BJ (cell line): ENCODE measurements at regions of chr1 and their contacts with region 1.

Region 1: GRCh38 chr1:15128520-15129313 is 24.8 kb upstream of the TMEM51 start:
- DNase-seq: no peak
- H3K4me3 ChIP-seq: no peak overlapping the region
- H3K27me3 ChIP-seq: no peaks in the 10 kb centered on the region
- CTCF ChIP-seq: peak; percentile 96

Region 2: GRCh38 chr1:15141935-15142539 is 13.3 kb after region 1 on chr1:
- CTCF ChIA-PET with region 1: interaction called, 10 read pairs
- POLR2A ChIA-PET with region 1: no interaction called
- DNase-seq: no peak
- H3K4me3 ChIP-seq: no peak overlapping the region
- H3K27me3 ChIP-seq: peaks cover 5% of the 10 kb centered on the region
- CTCF ChIP-seq: no peak

Region 3: GRCh38 chr1:15152318-15153183 is 23.8 kb after region 1 on chr1:
- CTCF ChIA-PET with region 1: interaction called, 16 read pairs
- POLR2A ChIA-PET with region 1: no interaction called
- DNase-seq: no peak
- H3K4me3 ChIP-seq: peak overlapping the region; percentile 41
- H3K27me3 ChIP-seq: peaks cover 11% of the 10 kb centered on the region
- CTCF ChIP-seq: peak; percentile 81

Region 4: DNA sequence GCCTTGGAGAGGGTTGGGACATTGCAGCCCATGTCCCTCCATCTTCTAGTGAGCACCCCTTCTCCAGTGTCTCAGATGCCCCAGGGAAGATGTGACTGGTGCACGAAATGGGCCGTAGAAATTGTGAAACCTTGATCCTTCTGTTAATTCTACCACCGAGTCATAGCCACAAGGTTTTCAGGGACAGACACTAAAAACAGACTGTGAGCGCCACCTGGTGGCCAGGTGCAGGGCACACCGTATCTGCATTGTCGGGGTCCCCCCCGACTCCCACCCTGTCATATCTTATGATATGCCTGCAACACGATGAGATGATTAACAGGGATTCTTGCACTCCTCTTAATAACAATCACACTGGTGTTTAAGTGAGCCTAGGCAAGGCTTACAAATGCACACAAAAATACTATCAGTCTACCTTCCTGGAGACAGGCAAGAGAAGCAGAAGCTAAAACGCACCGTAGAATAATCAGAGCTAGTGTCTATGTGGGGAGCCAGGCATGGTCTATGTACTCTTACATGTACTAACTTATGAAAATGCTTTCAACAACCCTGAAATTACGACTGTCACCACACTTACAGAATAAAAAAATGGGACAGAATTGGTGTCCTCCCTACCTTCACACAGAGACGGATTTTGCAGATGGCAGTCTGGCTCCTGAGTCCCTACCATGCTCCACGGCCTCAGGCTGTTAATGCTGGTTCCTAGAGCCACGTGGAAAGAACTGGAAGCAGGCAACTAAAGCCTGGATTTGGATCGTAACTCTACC is 176.2 kb after region 1 on chr1:
- CTCF ChIA-PET with region 1: interaction called, 36 read pairs
- POLR2A ChIA-PET with region 1: no interaction called
- DNase-seq: no peak
- H3K4me3 ChIP-seq: no peak overlapping the region
- H3K27me3 ChIP-seq: no peaks in the 10 kb centered on the region; the same call in 1 of the 2 replicates
- CTCF ChIP-seq: peak; percentile 82

Region 5: DNA sequence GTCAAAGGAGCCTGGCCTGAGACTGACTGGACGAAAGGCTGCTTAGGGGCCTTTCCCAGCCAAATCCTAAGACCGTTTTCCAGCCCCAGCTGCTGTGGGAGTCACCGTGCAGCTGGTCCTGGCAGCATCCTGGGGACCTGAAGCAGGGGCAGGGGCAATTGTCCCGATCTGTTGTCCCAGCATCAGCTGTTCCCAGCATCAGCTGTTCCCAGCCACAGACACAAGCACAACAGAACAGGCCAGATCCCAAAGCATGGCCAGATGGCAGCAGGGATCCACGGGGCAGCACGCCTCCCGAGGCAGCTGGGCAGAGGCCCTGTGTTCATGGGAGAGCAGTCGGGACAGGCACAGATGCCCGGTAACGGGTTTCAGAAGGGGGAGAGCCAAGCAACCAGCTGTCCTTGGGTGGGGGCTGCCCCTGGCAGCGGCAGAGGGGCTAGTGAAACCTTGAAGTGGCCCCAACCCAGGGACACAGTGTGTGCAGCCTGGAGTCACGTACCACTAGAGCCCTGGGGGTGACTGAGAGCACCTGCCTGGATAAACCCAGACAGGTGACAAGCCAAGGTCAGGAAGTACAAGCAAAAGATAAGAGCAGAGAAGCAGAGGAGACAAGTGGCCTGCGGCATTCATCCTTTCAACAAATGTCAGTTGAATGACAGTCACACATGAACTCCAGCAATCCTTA is 360.5 kb after region 1 on chr1:
- CTCF ChIA-PET with region 1: no interaction called
- POLR2A ChIA-PET with region 1: no interaction called
- DNase-seq: no peak
- H3K4me3 ChIP-seq: no peak overlapping the region
- H3K27me3 ChIP-seq: no peaks in the 10 kb centered on the region
- CTCF ChIP-seq: no peak